SK-N-SH (cell line): ENCODE measurements at regions of chr15 and their contacts with region 1.

Region 1: DNA sequence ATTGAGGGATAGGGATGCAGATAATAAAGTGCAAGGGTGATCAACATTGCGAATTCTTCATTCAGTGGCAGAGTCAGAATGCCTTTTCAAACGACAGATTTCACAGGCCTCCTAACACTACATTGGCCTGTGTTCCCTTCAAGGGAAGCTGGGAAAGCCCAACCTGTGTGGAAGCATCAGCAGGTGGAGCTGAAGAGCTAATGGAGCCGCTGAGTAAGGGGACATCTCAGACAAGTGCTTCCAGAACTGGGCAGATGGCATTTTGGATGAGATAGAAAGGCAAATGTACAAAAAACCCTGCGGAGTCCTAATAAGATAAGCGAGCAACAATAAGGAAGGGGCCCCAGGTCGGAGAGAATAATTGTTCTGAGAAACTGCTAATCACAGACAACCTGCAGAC is 8.5 kb upstream of the SLC24A5 start:
- DNase-seq: peak; percentile 36
- H3K4me3 ChIP-seq: no peak overlapping the region
- H3K27ac ChIP-seq: no peak overlapping the region
- H3K4me1 ChIP-seq: no peaks in the 10 kb centered on the region; a peak in 1 of 4 replicates
- H3K27me3 ChIP-seq: no peaks in the 10 kb centered on the region
- CTCF ChIP-seq: peak; percentile 64
- EP300 ChIP-seq: no peak
- RAD21 ChIP-seq: peak; percentile 81

Region 2: GRCh38 chr15:47975427-47975826 is 136.8 kb before region 1 on chr15:
- CTCF ChIA-PET with region 1: no interaction called
- POLR2A ChIA-PET with region 1: no interaction called
- DNase-seq: no peak
- H3K4me3 ChIP-seq: no peak overlapping the region
- H3K27ac ChIP-seq: no peak overlapping the region
- H3K4me1 ChIP-seq: no peaks in the 10 kb centered on the region
- H3K27me3 ChIP-seq: no peaks in the 10 kb centered on the region
- CTCF ChIP-seq: no peak
- EP300 ChIP-seq: no peak
- RAD21 ChIP-seq: no peak

Region 3: GRCh38 chr15:48062148-48062861 is 49.9 kb before region 1 on chr15:
- CTCF ChIA-PET with region 1: no interaction called
- POLR2A ChIA-PET with region 1: no interaction called
- DNase-seq: peak; percentile 17
- H3K4me3 ChIP-seq: no peak overlapping the region; a peak in 1 of 4 replicates
- H3K27ac ChIP-seq: no peak overlapping the region; a peak in 1 of 4 replicates
- H3K4me1 ChIP-seq: peaks cover 4 to 6% of the 10 kb centered on the region in 2 experiments; a peak in 3 of 4 replicates
- H3K27me3 ChIP-seq: no peaks in the 10 kb centered on the region
- CTCF ChIP-seq: no peak
- EP300 ChIP-seq: no peak
- RAD21 ChIP-seq: no peak

Region 4: GRCh38 chr15:48250640-48251076 is 138.4 kb after region 1 on chr15:
- CTCF ChIA-PET with region 1: interaction called, 46 read pairs
- POLR2A ChIA-PET with region 1: no interaction called
- DNase-seq: peak; percentile 58
- H3K4me3 ChIP-seq: no peak overlapping the region; a peak in 1 of 4 replicates
- H3K27ac ChIP-seq: no peak overlapping the region
- H3K4me1 ChIP-seq: no peaks in the 10 kb centered on the region
- H3K27me3 ChIP-seq: no peaks in the 10 kb centered on the region
- CTCF ChIP-seq: peak; percentile 77
- EP300 ChIP-seq: no peak
- RAD21 ChIP-seq: peak; percentile 87

Region 5: DNA sequence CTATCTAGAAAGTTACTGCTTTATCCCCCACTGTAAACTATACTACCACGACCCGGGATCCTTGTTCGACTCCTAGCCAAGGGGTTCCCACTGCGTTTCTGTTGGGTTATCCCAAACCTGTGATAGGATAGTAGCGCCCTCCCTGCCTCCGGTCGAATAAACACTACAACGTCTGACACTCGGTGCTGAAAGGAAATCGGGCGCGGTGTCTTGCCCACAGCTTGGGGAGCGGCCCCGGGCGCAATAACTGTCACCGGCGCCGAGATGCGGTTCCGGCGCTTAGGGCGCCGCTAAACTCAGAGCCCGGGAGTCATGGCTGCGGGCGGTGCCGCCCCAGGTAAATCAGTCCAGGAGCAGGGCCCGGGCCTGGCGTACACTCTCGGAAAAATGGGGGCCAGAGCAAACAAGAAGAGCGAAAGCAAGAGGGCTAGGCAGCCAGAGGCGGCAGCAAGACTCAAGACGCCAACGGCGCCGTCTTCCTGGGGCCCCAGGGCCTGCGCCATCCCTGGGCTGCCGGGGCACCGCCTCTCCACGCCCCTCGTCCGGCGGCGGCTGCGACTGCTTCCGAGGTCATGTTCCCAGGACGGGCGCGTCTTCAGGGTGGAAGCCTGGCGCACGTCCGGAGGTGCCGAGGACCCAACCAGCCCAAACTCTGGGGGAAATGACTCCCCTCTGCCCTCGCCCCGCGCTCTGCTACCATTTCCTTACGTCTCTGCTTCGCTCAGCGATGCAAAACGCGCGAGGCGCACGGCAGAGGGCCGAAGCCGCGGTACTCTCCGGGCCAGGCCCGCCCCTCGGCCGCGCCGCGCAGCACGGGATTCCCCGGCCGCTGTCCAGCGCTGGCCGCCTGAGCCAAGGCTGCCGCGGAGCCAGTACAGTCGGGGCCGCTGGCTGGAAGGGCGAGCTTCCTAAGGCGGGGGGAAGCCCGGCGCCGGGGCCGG is 218.9 kb after region 1 on chr15 and contains the start of gene DUT:
- CTCF ChIA-PET with region 1: no interaction called
- POLR2A ChIA-PET with region 1: no interaction called
- DNase-seq: peak; percentile 87
- H3K4me3 ChIP-seq: peak within 1 kb of the TSS; percentile 77 to 95
- H3K27ac ChIP-seq: peak within 1 kb of the TSS; percentile 86 to 94
- H3K4me1 ChIP-seq: peaks cover 7 to 17% of the 10 kb centered on the region in 2 experiments; a peak in 3 of 4 replicates
- H3K27me3 ChIP-seq: no peaks in the 10 kb centered on the region
- CTCF ChIP-seq: 0 out of 2 replicates have a peak, but pooled peaks have one; percentile 15
- EP300 ChIP-seq: 0 out of 4 replicates have a peak, but pooled peaks of 1 of the 2 experiments have one; percentile 1
- RAD21 ChIP-seq: no peak
- polyA plus RNA-seq, gene DUT: 67.1 and 79.3 TPM in 2 replicates